ENCODE measurements at regions of chr7 and their contacts with region 1.

Region 1: DNA sequence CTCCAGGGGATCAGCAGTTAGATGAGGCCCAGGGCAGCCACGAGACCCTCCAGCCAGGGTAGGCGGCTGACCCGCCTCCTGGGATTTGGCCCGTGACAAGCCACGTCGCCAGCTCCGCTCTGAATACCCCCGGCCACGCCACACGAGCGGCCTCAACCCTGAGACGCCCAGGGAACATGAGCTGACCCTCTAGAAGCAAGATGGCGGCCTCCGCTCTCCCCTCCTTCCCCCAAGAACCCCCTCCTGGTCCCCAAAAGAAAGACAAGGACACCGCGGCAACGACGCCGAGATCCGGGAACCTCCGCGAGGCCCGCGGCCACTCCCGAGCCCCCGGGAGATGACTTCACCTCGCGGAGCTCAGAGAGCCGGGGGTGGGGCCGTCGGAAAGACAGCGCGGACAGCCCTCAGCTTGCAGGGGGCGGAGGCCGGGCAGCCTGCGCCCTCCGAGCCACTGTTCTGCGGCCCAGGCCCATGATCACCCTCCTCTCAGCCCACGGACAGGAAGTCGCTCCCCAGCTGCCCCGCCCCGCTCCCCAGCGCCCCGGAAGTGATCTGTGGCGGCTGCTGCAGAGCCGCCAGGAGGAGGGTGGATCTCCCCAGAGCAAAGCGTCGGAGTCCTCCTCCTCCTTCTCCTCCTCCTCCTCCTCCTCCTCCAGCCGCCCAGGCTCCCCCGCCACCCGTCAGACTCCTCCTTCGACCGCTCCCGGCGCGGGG is at the start of gene RALA:
- DNase-seq: peak; percentile 91 to 99 (median 94)

Region 2: DNA sequence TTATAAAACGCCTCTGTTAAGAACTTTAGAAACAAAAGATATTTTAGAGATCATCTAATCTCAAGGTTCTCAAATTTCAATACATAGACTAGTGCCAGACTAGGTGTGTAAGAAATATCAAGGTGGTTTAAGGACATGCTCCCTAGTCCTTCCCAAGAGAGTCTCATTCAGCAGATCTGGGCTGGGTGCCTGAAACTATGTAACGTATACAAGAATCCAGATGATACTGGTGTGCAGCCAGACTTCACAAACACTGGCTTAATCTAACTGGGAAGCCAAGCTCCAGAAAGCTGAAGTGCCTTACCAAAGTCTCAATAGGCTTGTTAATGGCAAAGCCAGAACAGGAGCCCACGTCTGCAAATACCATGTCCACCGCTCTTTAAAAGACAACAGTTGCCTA is 887.0 kb before region 1 on chr7:
- intact Hi-C with region 1: no loop called
- DNase-seq: no peak

Region 3: GRCh38 chr7:39507866-39508551 is 115.2 kb before region 1 on chr7:
- intact Hi-C with region 1: no loop called
- DNase-seq: no peak

Region 4: DNA sequence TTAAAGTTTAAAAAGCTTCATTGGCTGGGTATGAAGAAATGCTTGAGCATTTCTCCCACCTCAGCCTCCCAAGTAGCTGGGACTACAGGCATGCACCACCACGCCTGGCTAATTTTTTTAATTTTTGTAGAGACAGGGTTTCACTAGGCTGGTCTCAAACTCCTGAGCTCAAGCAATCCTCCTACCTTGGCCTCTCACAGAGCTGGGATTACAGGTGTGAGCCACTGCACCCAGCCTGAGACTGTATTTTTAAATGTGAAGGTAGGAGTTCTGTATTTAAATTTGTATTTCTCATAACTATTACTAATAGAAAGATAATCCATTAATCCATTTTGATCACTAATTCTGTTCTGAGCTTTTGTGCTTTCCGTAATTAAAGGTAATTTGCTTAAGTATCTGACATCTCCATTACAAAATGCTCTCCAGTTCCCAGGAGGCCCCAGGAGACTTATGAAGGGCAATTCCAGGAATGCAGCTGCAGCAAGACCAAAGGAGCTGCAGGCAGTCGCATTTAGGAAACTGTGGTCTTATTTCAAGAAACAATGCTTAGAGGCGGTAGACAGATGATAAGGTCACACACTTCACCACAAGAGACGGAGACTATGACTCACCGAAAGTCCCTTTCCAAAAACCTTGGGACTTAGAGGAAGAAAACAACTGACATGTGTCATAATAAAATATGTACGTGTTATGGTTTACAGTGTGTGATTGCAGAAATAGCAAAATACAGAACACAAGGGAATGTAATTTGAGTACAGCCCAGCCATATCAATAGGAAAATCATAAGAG is 33.7 kb before region 1 on chr7:
- intact Hi-C with region 1: loop called (anchors 5 kb)
- DNase-seq: no peak

Region 5: GRCh38 chr7:39732837-39733804 is 109.9 kb after region 1 on chr7:
- intact Hi-C with region 1: loop called (anchors 5 kb)
- DNase-seq: peak; percentile 90 to 99 (median 97)